Posterior cingulate gyrus (tissue), 11 donors: ENCODE measurements at regions of chr3 and their contacts with region 1.

Region 1: GRCh38 chr3:71006810-71007785 is 576.4 kb downstream of the FOXP1 start:
- DNase-seq: no peak

Region 2: GRCh38 chr3:71069797-71070196 is 62.7 kb after region 1 on chr3:
- intact Hi-C with region 1: loop called (anchors 5 kb)
- DNase-seq: peak in 5 of 10 donors; percentile 40 to 91 (median 72)

Region 3: DNA sequence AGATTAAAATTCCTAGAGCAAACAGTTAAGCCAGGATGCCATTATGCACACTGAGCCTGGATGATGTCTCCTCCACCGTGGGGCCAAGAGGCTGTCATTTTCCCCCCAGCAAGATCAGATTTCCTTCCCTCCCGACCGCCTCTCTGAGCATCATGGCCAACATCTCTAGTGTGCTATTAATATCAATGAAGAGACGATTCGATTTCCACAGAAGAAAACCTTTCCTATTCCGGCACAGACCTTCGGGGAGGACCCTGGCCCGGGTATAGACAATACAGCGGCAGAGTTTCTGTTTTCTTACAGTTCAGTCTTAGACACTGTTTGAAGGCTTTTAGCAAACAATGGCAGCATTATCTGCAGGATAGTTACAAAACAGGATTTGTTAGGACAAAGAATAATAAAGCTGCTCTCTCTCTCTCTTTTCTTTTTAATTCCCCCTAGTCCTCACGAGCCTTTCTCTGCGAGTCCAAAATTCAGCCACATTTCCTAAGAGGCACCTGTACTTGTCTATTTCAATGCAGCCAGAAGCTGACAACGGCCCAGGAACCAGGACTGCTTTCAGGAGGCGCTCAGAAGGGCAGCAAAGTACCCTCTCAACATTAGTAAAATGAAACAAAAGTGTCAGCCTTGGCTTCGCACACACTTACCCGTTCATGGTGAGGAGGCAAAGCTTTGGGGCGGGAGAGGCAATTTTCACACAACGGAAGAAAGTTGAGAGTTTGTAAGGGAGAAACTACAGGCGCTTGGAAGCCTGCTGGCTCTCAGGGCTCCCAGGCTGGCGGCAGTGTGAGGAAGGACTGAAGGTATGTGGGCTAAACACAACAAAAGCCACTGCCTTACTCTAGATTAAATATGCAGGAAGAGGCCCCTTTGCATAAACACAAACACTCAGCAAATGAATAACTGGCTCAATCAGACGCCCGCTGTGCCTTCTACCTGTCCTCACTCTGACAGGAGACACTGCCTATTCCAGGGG is 298.4 kb after region 1 on chr3:
- intact Hi-C with region 1: loop called (anchors 10 kb)
- DNase-seq: peak in 4 of 10 donors; percentile 14 to 87 (median 44)